ENCODE measurements at regions of chr15 and their contacts with region 1.

Region 1: GRCh38 chr15:39843561-39843960 is 60.9 kb upstream of the FSIP1 start:
- DNase-seq: no peak
- H3K4me3 ChIP-seq: no peak overlapping the region
- H3K27ac ChIP-seq: no peak overlapping the region
- H3K4me1 ChIP-seq: peaks cover 15% of the 10 kb centered on the region
- H3K27me3 ChIP-seq: no peaks in the 10 kb centered on the region
- CTCF ChIP-seq: no peak

Region 2: DNA sequence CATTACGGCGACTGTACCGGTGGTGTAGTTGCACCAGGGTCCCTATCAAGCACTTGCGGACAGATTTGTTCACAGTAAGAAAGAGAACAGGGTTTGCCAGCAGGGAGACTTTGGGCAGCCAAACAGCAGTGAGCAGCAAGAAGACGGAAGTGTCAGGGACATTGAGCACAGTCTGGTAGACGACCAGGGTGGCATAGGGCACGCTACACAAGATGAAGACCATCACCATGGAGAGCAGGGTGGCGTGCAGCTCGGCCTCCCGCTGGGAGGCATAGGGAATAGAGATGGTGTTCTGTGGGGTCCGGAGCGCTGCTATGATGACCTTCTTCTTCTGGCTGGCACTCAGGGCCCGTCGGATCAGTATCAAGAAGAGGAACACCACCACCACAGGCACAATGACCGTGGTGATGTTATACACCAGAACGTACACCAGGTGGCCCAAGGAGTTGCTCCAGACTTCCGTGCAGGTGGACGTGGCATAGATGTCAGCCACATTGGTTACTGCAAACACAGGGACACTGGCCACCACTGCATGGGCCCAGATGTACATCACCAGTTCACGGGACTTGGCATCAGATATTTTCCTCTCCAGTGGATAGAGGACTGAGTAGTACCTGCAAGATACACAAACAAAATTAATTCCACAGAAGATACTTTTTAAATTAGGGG is 41.8 kb before region 1 on chr15:
- CTCF ChIA-PET with region 1: no interaction called
- dilution Hi-C with region 1: no loop called
- in situ Hi-C with region 1: no loop called
- intact Hi-C with region 1: loop called (anchors 5 kb)
- DNase-seq: peak; percentile 28
- H3K4me3 ChIP-seq: no peak overlapping the region
- H3K27ac ChIP-seq: no peak overlapping the region
- H3K4me1 ChIP-seq: peaks cover 16% of the 10 kb centered on the region
- H3K27me3 ChIP-seq: no peaks in the 10 kb centered on the region
- CTCF ChIP-seq: peak; percentile 58 to 70

Measured in mammary epithelial cell (primary cell).